Adrenal gland (tissue), 19 donors: ENCODE measurements at regions of chr22 and their contacts with region 1.

Region 1: DNA sequence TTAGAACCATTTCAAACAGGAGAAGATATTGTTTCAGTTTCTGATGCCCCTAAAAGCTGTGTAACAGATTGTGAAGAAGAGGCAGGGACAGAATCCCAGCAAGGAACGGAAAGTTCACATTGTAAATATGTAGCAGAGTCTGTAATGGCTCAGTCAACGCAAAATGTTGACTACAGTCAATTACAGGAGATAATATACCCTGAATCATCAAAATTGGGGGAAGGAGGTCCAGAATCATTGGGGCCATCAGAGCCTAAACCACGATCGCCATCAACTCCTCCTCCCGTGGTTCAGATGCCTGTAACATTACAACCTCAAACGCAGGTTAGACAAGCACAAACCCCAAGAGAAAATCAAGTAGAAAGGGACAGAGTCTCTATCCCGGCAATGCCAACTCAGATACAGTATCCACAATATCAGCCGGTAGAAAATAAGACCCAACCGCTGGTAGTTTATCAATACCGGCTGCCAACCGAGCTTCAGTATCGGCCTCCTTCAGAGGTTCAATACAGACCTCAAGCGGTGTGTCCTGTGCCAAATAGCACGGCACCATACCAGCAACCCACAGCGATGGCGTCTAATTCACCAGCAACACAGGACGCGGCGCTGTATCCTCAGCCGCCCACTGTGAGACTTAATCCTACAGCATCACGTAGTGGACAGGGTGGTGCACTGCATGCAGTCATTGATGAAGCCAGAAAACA is 40.8 kb downstream of the IGLL1 start:
- DNase-seq: peak; percentile 73 to 95 (median 86)
- H3K4me3 ChIP-seq: no peak overlapping the region
- H3K27ac ChIP-seq: no peak overlapping the region
- H3K4me1 ChIP-seq: peaks cover 0 to 8% of the 10 kb centered on the region in 2 donors
- H3K27me3 ChIP-seq: no peaks in the 10 kb centered on the region
- CTCF ChIP-seq: peak; percentile 79 to 98 (median 96)
- POLR2A ChIP-seq: no peak

Region 2: GRCh38 chr22:23305922-23306374 is 233.3 kb before region 1 on chr22:
- intact Hi-C with region 1: loop called in 1 of 2 experiments (anchors 10 kb)
- DNase-seq: peak; percentile 69 to 97 (median 85)
- H3K4me3 ChIP-seq: no peak overlapping the region
- H3K27ac ChIP-seq: peak overlapping the region; percentile 1 to 89 (median 64)
- H3K4me1 ChIP-seq: peaks cover 4 to 26% of the 10 kb centered on the region in 2 donors
- H3K27me3 ChIP-seq: no peaks in the 10 kb centered on the region
- CTCF ChIP-seq: no peak
- POLR2A ChIP-seq: no peak

Region 3: GRCh38 chr22:23402275-23403151 is 136.8 kb before region 1 on chr22:
- intact Hi-C with region 1: loop called in 1 of 2 experiments (anchors 10 kb)
- DNase-seq: peak in 6 of 7 donors; percentile 49 to 82 (median 56)
- H3K4me3 ChIP-seq: peak overlapping the region in 1 of 4 donors; percentile 46
- H3K27ac ChIP-seq: no peak overlapping the region
- H3K4me1 ChIP-seq: no peaks in the 10 kb centered on the region
- H3K27me3 ChIP-seq: no peaks in the 10 kb centered on the region
- CTCF ChIP-seq: peak; percentile 21 to 59 (median 37)
- POLR2A ChIP-seq: no peak